Left cardiac atrium (tissue), 4 donors: ENCODE measurements at regions of chr11 and their contacts with region 1.

Region 1: DNA sequence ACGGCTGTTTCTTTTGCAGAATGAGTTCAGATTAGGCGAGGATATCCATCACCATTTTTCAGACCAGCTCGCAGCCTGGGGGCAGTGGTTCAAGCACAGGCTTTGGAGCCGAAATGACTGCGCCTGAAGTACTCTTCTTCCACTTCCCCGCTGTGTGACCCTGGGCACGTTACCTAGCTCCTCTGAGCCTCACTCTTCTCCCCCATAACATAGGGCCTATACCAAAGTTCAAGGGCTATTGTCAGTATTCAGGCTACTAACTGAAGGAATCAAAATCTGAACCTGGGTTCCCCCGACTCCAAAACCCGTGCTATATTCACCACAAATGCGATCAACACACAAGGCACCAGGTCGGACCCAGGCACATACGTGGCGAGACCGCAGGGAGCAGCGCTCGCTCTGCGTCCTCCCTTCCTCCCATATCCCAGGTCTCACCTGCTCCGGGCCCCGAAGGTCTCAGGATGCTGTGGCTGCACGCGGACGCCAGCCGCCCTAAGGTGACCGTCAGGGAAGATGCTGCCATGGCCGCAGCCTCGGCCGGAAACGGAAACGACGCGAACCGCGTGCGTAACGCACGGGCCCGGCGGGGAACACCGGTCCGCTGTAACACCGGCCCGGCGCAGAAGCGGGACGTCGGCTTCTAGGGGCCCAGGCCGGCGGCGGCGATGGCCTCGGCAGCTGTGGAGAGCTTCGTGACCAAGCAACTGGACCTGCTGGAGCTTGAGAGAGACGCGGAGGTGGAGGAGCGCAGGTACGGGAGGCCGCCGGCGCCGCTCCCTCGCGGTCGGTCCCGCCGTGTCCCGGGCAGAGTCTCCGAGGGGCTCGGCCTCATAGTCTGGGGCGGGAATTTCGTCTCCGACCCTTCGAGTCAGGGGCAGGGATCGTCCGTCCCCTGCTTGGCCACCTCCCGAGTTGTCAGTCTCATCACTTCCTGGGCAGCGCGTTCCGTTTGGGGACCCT is at the starts of genes IGHMBP2 and MRPL21:
- DNase-seq: peak; percentile 89
- ATAC-seq: peak; percentile 98 to 99
- total RNA-seq, gene IGHMBP2: 8.2 to 9.0 TPM
- total RNA-seq, gene MRPL21: 76.0 to 89.7 TPM

Region 2: GRCh38 chr11:69048718-69049489 is 145.3 kb after region 1 on chr11 and contains the start of gene TPCN2:
- intact Hi-C with region 1: loop called in 1 of 2 experiments (anchors 10 kb)
- DNase-seq: peak; percentile 96
- ATAC-seq: peak; percentile 95 to 97
- total RNA-seq, gene TPCN2: 7.3 to 9.7 TPM